ENCODE measurements at regions of chr2 and their contacts with region 1.

Region 1: DNA sequence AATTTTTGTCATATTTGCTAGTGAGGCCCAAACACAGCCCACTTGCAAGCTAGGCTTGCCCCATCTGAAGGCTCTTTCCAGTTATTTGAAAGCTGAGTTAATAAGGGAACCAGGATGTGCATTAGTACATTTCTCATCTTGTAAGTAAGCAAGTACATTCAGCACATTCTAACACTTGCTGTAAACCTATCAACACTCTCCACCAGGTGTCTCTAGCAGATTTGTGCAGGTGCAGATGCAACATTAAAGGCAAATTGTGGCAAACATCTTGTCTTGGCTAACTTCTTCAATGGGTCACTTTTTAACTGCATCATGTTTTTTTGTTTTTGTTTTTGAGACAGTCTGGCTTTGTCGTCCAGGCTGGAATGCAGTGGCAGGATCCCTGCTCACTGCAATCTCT is 25.3 kb upstream of the MFSD6 start:
- DNase-seq: peak; percentile 49
- H3K4me3 Mint-ChIP-seq: no peak overlapping the region
- H3K27ac Mint-ChIP-seq: no peak overlapping the region
- H3K4me1 Mint-ChIP-seq: peaks cover 2% of the 10 kb centered on the region
- H3K27me3 Mint-ChIP-seq: no peaks in the 10 kb centered on the region

Region 2: DNA sequence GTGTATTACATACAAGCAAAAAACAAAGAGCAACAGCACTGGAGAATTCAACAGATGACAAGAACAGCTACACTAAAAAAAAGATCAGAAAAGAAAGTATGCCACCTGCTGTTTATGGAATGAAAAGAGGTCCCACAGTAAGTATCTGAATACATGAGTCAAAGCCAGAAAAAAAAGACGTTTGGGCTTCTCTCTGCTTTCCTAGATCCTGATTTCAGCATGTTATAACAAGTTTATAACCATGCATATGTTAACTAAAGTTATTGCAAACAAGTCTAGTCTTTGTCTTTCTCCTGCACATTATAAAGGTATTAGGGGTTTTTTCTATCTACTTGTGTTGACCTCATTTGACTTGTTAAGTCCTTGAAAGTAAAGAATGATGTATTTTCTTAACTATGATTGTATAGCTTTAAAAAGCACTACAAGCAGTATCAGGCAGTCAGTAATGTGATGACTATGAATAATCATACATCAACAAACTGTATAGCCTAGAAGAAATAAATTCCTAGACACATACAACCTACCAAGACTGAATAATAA is 1094.8 kb before region 1 on chr2:
- CTCF ChIA-PET with region 1: no interaction called
- intact Hi-C with region 1: no loop called
- DNase-seq: no peak
- H3K4me3 Mint-ChIP-seq: no peak overlapping the region
- H3K27ac Mint-ChIP-seq: peak overlapping the region; percentile 80
- H3K4me1 Mint-ChIP-seq: peaks cover 66% of the 10 kb centered on the region
- H3K27me3 Mint-ChIP-seq: no peaks in the 10 kb centered on the region

Region 3: GRCh38 chr2:190323406-190323805 is 59.4 kb before region 1 on chr2:
- CTCF ChIA-PET with region 1: no interaction called
- intact Hi-C with region 1: no loop called
- DNase-seq: no peak
- H3K4me3 Mint-ChIP-seq: no peak overlapping the region
- H3K27ac Mint-ChIP-seq: no peak overlapping the region
- H3K4me1 Mint-ChIP-seq: peaks cover 19% of the 10 kb centered on the region
- H3K27me3 Mint-ChIP-seq: peaks cover 4% of the 10 kb centered on the region

Region 4: GRCh38 chr2:190365499-190366204 is 17.2 kb before region 1 on chr2:
- CTCF ChIA-PET with region 1: no interaction called
- intact Hi-C with region 1: no loop called
- DNase-seq: no peak
- H3K4me3 Mint-ChIP-seq: no peak overlapping the region
- H3K27ac Mint-ChIP-seq: no peak overlapping the region
- H3K4me1 Mint-ChIP-seq: peaks cover 11% of the 10 kb centered on the region
- H3K27me3 Mint-ChIP-seq: no peaks in the 10 kb centered on the region

Region 5: GRCh38 chr2:190408538-190409271 is 25.9 kb after region 1 on chr2:
- CTCF ChIA-PET with region 1: interaction called, 4 read pairs
- intact Hi-C with region 1: loop called (anchors 2 kb)
- DNase-seq: peak; percentile 71
- H3K4me3 Mint-ChIP-seq: peak overlapping the region; percentile 84
- H3K27ac Mint-ChIP-seq: peak overlapping the region; percentile 90
- H3K4me1 Mint-ChIP-seq: peaks cover 46% of the 10 kb centered on the region
- H3K27me3 Mint-ChIP-seq: no peaks in the 10 kb centered on the region

Region 6: DNA sequence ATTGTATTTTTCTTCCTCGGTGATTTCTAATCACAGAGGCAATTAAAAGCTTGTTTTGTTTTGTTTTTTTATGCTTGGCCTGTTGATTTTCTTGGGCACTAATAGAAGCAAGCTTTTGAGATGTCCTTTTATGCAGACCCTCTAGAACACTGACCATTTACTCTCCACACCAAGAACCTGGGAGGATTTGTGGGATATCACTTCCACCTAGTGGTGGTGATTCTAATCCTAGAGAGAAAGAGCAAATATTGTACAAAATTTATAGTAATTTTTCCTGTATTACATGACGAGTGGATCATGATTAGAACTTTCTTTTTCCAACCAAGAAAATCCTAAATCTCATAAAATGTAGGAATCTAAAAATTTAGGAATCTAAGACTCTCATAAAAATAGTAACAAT is 128.3 kb after region 1 on chr2:
- CTCF ChIA-PET with region 1: interaction called, 3 read pairs
- intact Hi-C with region 1: loop called (anchors 1 kb)
- DNase-seq: no peak
- H3K4me3 Mint-ChIP-seq: no peak overlapping the region
- H3K27ac Mint-ChIP-seq: no peak overlapping the region
- H3K4me1 Mint-ChIP-seq: peaks cover 26% of the 10 kb centered on the region
- H3K27me3 Mint-ChIP-seq: no peaks in the 10 kb centered on the region

Region 7: GRCh38 chr2:190550137-190550536 is 167.3 kb after region 1 on chr2:
- CTCF ChIA-PET with region 1: no interaction called
- intact Hi-C with region 1: loop called (anchors 1 kb)
- DNase-seq: no peak
- H3K4me3 Mint-ChIP-seq: no peak overlapping the region
- H3K27ac Mint-ChIP-seq: no peak overlapping the region
- H3K4me1 Mint-ChIP-seq: peaks cover 13% of the 10 kb centered on the region
- H3K27me3 Mint-ChIP-seq: no peaks in the 10 kb centered on the region

Region 8: GRCh38 chr2:190636373-190636772 is 253.5 kb after region 1 on chr2:
- CTCF ChIA-PET with region 1: no interaction called
- intact Hi-C with region 1: loop called (anchors 5 kb)
- DNase-seq: no peak
- H3K4me3 Mint-ChIP-seq: no peak overlapping the region
- H3K27ac Mint-ChIP-seq: no peak overlapping the region
- H3K4me1 Mint-ChIP-seq: peaks cover 9% of the 10 kb centered on the region
- H3K27me3 Mint-ChIP-seq: no peaks in the 10 kb centered on the region

Region 9: DNA sequence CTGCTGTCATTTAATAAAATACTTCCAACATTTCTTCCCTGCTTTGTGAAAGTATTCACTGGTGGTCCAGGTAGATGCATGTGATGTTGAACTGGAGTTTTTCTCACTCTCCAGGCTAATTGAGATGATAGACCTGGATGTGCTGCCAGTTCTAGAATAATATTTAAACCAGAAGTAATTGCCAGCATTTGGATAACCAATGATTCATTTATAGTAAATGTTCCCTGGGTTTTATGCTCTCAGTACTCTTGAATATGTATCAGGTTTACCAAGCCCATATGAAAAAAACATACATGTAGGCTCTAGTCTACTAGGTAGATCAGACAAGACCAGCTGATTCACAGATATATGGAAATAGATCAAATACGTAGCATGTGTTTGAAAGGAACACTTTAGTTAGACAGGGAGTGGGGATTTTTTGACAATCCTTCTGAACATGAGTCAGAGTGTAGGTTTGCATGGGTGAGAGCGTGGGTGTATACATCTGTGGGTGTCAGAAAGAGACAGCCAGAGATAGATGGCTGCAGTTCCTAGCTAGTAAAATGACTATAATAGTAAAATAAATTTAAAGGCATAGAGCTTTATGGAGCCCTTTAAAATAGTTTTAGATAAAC is 381.2 kb after region 1 on chr2:
- CTCF ChIA-PET with region 1: no interaction called
- intact Hi-C with region 1: loop called (anchors 1 kb)
- DNase-seq: peak; percentile 78
- H3K4me3 Mint-ChIP-seq: no peak overlapping the region
- H3K27ac Mint-ChIP-seq: peak overlapping the region; percentile 7
- H3K4me1 Mint-ChIP-seq: peaks cover 56% of the 10 kb centered on the region
- H3K27me3 Mint-ChIP-seq: no peaks in the 10 kb centered on the region

Region 10: GRCh38 chr2:190804182-190804795 is 421.4 kb after region 1 on chr2:
- CTCF ChIA-PET with region 1: interaction called, 5 read pairs
- intact Hi-C with region 1: loop called (anchors 1 kb)
- DNase-seq: no peak
- H3K4me3 Mint-ChIP-seq: no peak overlapping the region
- H3K27ac Mint-ChIP-seq: no peak overlapping the region
- H3K4me1 Mint-ChIP-seq: peaks cover 23% of the 10 kb centered on the region
- H3K27me3 Mint-ChIP-seq: no peaks in the 10 kb centered on the region

Measured in activated naive CD4-positive, alpha-beta T cell treated with anti-CD3 and anti-CD28 coated beads for 36 hours (primary cell).